Activated CD4-positive, alpha-beta memory T cell treated with anti-CD3 and anti-CD28 coated beads, Interleukin-2, amount 10 ng/mL, durations not matched to agents 7 days and 5 days (primary cell): ENCODE measurements at regions of chr15 and their contacts with region 1.

Region 1: GRCh38 chr15:60179786-60180391 is 175.8 kb downstream of the FOXB1 start:
- DNase-seq: peak; percentile 35
- H3K4me3 Mint-ChIP-seq: no peak overlapping the region
- H3K27ac Mint-ChIP-seq: no peak overlapping the region
- H3K4me1 Mint-ChIP-seq: no peaks in the 10 kb centered on the region
- H3K27me3 Mint-ChIP-seq: peaks cover 38% of the 10 kb centered on the region

Region 2: DNA sequence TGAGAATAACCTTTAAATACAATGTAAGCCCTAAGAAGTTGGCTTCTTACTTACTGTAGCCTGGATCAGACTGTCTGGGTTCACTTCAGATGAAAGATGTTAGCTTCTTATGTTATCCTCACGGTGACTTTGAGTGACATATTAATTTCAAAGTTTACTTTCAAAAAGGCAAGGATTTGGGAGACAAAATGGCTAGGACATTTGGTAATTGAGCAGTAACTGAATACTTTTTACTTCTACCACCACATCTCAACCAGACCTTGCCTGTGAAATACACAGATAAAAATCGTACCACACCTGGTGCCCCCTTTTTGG is 454.8 kb before region 1 on chr15:
- CTCF ChIA-PET with region 1: interaction called, 13 read pairs
- POLR2A ChIA-PET with region 1: no interaction called
- DNase-seq: no peak
- H3K4me3 Mint-ChIP-seq: no peak overlapping the region
- H3K27ac Mint-ChIP-seq: no peak overlapping the region
- H3K4me1 Mint-ChIP-seq: no peaks in the 10 kb centered on the region
- H3K27me3 Mint-ChIP-seq: peaks cover 23% of the 10 kb centered on the region

Region 3: GRCh38 chr15:59997070-59997701 is 182.7 kb before region 1 on chr15:
- CTCF ChIA-PET with region 1: interaction called, 12 read pairs
- POLR2A ChIA-PET with region 1: no interaction called
- DNase-seq: peak; percentile 81
- H3K4me3 Mint-ChIP-seq: peak overlapping the region; percentile 67
- H3K27ac Mint-ChIP-seq: peak overlapping the region; percentile 20
- H3K4me1 Mint-ChIP-seq: peaks cover 77% of the 10 kb centered on the region
- H3K27me3 Mint-ChIP-seq: peaks cover 99% of the 10 kb centered on the region